PC-3 (cell line): ENCODE measurements at regions of chr3 and their contacts with region 1.

Region 1: GRCh38 chr3:32401556-32402081 is 10.0 kb downstream of the CMTM7 start:
- DNase-seq: peak; percentile 87
- ATAC-seq: peak; percentile 82
- H3K4me3 ChIP-seq: peak overlapping the region; percentile 61
- H3K27ac ChIP-seq: peak overlapping the region; percentile 90
- H3K4me1 ChIP-seq: peaks cover 23% of the 10 kb centered on the region
- H3K27me3 ChIP-seq: no peaks in the 10 kb centered on the region
- CTCF ChIP-seq: 0 out of 2 replicates have a peak, but pooled peaks have one; percentile 8

Region 2: GRCh38 chr3:32296256-32297204 is 105.1 kb before region 1 on chr3:
- CTCF ChIA-PET with region 1: no interaction called
- POLR2A ChIA-PET with region 1: no interaction called
- intact Hi-C with region 1: loop called (anchors 2 kb)
- DNase-seq: peak; percentile 73
- ATAC-seq: peak; percentile 94
- H3K4me3 ChIP-seq: no peak overlapping the region
- H3K27ac ChIP-seq: no peak overlapping the region
- H3K4me1 ChIP-seq: 0 out of 2 replicates have a peak, but pooled peaks cover 2% of the 10 kb centered on the region
- H3K27me3 ChIP-seq: no peaks in the 10 kb centered on the region
- CTCF ChIP-seq: peak; percentile 93

Region 3: GRCh38 chr3:32340039-32340438 is 61.6 kb before region 1 on chr3:
- CTCF ChIA-PET with region 1: no interaction called
- POLR2A ChIA-PET with region 1: no interaction called
- intact Hi-C with region 1: loop called (anchors 5 kb)
- DNase-seq: peak; percentile 74
- ATAC-seq: peak; percentile 94
- H3K4me3 ChIP-seq: no peak overlapping the region
- H3K27ac ChIP-seq: no peak overlapping the region
- H3K4me1 ChIP-seq: no peaks in the 10 kb centered on the region
- H3K27me3 ChIP-seq: no peaks in the 10 kb centered on the region
- CTCF ChIP-seq: peak; percentile 83

Region 4: GRCh38 chr3:32374788-32375595 is 26.6 kb before region 1 on chr3:
- CTCF ChIA-PET with region 1: no interaction called
- POLR2A ChIA-PET with region 1: no interaction called
- intact Hi-C with region 1: loop called (anchors 2 kb)
- DNase-seq: peak; percentile 92
- ATAC-seq: peak; percentile 74
- H3K4me3 ChIP-seq: no peak overlapping the region
- H3K27ac ChIP-seq: no peak overlapping the region
- H3K4me1 ChIP-seq: no peaks in the 10 kb centered on the region
- H3K27me3 ChIP-seq: no peaks in the 10 kb centered on the region
- CTCF ChIP-seq: peak; percentile 85

Region 5: GRCh38 chr3:32421991-32422859 is 20.6 kb after region 1 on chr3:
- CTCF ChIA-PET with region 1: no interaction called
- POLR2A ChIA-PET with region 1: no interaction called
- intact Hi-C with region 1: loop called (anchors 1 kb)
- DNase-seq: peak; percentile 98
- ATAC-seq: peak; percentile 53
- H3K4me3 ChIP-seq: peak overlapping the region; percentile 53; the same call in 1 of the 2 replicates
- H3K27ac ChIP-seq: peak overlapping the region; percentile 99
- H3K4me1 ChIP-seq: peaks cover 62% of the 10 kb centered on the region
- H3K27me3 ChIP-seq: no peaks in the 10 kb centered on the region
- CTCF ChIP-seq: no peak